Heart right ventricle (tissue), 16 donors: ENCODE measurements at regions of chr3 and their contacts with region 1.

Region 1: DNA sequence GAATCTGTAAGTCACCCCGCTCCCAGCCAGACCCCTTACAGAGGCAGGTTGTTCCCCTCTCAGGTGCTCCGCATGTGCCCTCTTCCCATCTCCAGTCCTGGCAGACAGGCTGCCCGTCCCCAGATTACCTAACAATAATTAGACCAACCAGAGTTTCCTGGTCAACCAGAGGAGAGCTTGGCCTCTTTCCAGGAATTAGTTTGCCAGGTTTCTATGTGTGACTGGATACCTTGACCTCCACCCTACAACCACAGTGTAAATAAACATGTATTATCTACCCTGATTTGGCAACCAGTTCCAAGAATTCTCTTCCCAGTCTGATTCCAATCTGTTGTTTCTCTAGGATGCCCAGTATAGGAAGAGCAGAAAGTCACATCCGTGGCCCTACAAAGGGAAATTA is 178.0 kb upstream of the UMPS start:
- DNase-seq: no peak
- ATAC-seq: peak in 3 of 8 donors; percentile 31 to 78 (median 43)
- H3K4me3 ChIP-seq: no peak overlapping the region
- H3K27ac ChIP-seq: no peak overlapping the region
- H3K4me1 ChIP-seq: peaks cover 0 to 18% (median 8%) of the 10 kb centered on the region in 9 donors
- H3K27me3 ChIP-seq: peaks cover 0 to under 1% (median 0%) of the 10 kb centered on the region in 7 donors
- CTCF ChIP-seq: no peak

Region 2: DNA sequence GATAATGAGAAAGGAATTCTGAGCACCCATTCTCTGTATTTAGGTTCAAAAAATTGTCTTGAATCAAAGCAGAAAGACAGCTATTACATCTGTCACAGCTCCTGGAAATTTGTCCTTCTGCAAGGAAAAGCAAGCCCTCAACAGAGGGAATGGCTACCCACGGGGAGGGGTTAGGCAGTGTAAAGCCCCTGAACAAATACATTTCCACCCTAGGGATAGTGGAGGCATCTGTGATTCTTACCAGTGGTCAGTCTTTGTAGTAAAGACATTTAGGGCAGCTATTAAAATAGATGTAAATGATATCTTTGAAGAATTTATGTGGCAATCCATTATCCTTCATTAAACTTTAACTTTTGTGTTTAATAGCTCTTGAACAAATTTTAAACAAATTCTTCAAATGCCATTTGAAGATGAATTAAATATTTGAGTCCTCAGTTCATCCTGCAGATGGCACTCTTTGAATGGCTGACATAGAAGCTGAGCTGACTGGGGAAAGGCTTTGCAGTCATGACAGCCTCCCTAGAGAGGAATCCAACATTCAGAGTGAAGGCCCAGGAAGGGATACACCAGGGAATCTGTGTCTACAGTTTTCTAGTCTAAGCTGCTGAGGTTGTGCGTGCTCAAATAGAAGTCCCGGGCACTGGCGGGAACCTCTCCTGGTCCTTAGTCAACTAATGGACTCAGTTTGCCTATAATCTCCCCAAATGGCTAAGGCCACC is 200.7 kb before region 1 on chr3:
- intact Hi-C with region 1: loop called in 8 of 10 experiments (anchors 5 to 10 kb)
- DNase-seq: peak in 1 of 2 donors; percentile 52
- ATAC-seq: peak in 7 of 8 donors; percentile 63 to 88 (median 80)
- H3K4me3 ChIP-seq: no peak overlapping the region
- H3K27ac ChIP-seq: no peak overlapping the region
- H3K4me1 ChIP-seq: no peaks in the 10 kb centered on the region
- H3K27me3 ChIP-seq: no peaks in the 10 kb centered on the region
- CTCF ChIP-seq: peak; percentile 39 to 74 (median 60)

Region 3: GRCh38 chr3:124486324-124486723 is 65.9 kb before region 1 on chr3:
- intact Hi-C with region 1: loop called in 6 of 10 experiments (anchors 2 to 10 kb)
- DNase-seq: no peak
- ATAC-seq: no peak
- H3K4me3 ChIP-seq: no peak overlapping the region
- H3K27ac ChIP-seq: no peak overlapping the region
- H3K4me1 ChIP-seq: no peaks in the 10 kb centered on the region
- H3K27me3 ChIP-seq: no peaks in the 10 kb centered on the region
- CTCF ChIP-seq: peak in 2 of 9 donors; percentile 6 to 17

Region 4: GRCh38 chr3:124492811-124493210 is 59.4 kb before region 1 on chr3:
- intact Hi-C with region 1: loop called in 9 of 10 experiments (anchors 1 to 10 kb)
- DNase-seq: peak in 1 of 2 donors; percentile 23
- ATAC-seq: peak in 7 of 8 donors; percentile 35 to 74 (median 61)
- H3K4me3 ChIP-seq: no peak overlapping the region
- H3K27ac ChIP-seq: no peak overlapping the region
- H3K4me1 ChIP-seq: peaks cover 0 to 8% (median 0%) of the 10 kb centered on the region in 9 donors
- H3K27me3 ChIP-seq: no peaks in the 10 kb centered on the region
- CTCF ChIP-seq: peak in 8 of 9 donors; percentile 12 to 58 (median 46)

Region 5: DNA sequence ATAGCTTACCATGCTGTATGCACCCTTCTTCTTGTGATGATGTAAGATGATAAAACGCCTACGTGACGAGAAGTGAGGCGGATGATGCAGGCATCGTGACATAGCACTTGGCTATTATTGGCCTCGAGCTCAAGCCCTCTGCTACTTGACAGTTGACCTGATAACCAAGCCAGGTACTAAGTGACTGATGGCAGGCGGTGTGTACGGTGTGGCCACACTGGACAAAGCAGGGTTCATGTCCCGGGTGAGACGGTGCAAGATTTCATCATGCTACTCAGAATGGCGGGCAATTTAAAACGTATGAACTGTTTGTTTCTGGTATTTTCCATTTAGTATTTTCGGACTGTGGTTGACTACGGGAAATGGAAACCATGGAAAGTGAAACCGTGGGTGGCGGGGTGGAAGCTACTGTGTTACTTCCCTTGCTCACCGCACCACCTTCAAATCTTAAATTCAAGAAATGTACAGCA is 602.6 kb after region 1 on chr3:
- intact Hi-C with region 1: no loop called
- DNase-seq: no peak
- ATAC-seq: peak in 4 of 8 donors; percentile 25 to 64 (median 34)
- H3K4me3 ChIP-seq: no peak overlapping the region
- H3K27ac ChIP-seq: peak overlapping the region in 1 of 10 donors; percentile 73
- H3K4me1 ChIP-seq: peaks cover 0 to 37% (median 15%) of the 10 kb centered on the region in 9 donors
- H3K27me3 ChIP-seq: no peaks in the 10 kb centered on the region
- CTCF ChIP-seq: no peak